ENCODE measurements at regions of chr20 and their contacts with region 1.

Region 1: GRCh38 chr20:10427060-10427692 is 6.8 kb downstream of the MKKS start:
- DNase-seq: no peak
- ATAC-seq: peak; percentile 72
- H3K4me3 ChIP-seq: no peak overlapping the region
- H3K27ac ChIP-seq: no peak overlapping the region
- H3K4me1 ChIP-seq: peaks cover 0 to 16% of the 10 kb centered on the region in 2 experiments; a peak in 3 of 4 replicates
- H3K27me3 ChIP-seq: no peaks in the 10 kb centered on the region
- CTCF ChIP-seq: peak; percentile 43 to 88 (median 78); a peak in 5 of 6 replicates
- POLR2A ChIP-seq: no peak
- RAD21 ChIP-seq: peak; percentile 54

Region 2: DNA sequence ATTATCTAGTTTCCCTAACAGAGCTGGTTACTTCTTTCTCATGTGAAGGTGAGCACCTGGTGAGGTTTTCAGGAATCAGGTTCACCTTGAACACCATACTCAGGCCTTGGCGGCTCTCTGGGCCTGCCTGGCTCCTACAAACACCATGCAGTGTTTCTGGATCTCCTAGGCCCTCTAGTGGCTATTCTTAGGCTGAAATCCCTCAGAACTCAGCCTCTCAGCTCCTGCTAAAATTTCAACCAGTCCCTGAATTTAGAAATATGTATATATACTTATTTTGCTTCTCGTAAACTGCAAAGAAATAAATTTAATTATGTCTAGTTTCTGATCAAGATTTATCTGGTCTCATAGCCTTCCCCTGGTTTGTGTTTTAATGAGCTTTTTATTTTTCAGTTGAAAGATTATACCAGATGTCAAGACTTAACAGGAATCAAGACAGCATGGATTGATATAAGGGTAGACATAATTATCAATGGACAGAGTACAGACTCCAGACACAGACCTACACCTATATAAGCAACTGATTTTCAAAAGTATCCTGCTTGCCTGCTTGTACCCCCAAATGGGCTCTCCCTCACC is 336.5 kb before region 1 on chr20:
- CTCF ChIA-PET with region 1: interaction called, 3 read pairs
- POLR2A ChIA-PET with region 1: no interaction called
- RAD21 ChIA-PET with region 1: no interaction called
- intact Hi-C with region 1: loop called (anchors 5 kb)
- DNase-seq: peak; percentile 38
- ATAC-seq: peak; percentile 91
- H3K4me3 ChIP-seq: no peak overlapping the region
- H3K27ac ChIP-seq: no peak overlapping the region
- H3K4me1 ChIP-seq: peaks cover 5 to 13% of the 10 kb centered on the region in 2 experiments; a peak in 3 of 4 replicates
- H3K27me3 ChIP-seq: no peaks in the 10 kb centered on the region
- CTCF ChIP-seq: peak; percentile 51 to 76 (median 73); a peak in 5 of 6 replicates
- POLR2A ChIP-seq: no peak
- RAD21 ChIP-seq: peak; percentile 80

Region 3: DNA sequence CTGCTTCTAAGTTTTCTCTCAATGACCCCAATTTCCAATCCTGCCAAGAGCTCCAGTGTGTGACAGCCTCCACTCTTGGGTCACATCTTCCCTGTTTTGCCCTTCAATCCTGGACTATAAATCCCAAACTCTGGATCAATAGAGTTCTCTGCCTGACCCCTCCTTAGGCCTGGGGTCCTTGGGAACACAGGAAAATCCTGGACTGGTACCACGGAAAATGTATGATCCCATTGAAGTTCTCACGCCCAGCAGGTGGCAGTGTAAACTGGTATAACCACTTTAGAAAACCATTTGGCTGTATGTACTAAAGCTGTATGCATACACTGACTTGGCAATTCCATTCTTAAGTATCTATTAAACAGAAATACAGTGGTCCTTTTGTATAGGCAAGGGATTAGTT is 110.6 kb before region 1 on chr20:
- CTCF ChIA-PET with region 1: interaction called, 3 read pairs
- POLR2A ChIA-PET with region 1: no interaction called
- RAD21 ChIA-PET with region 1: no interaction called
- intact Hi-C with region 1: loop called (anchors 1 kb)
- DNase-seq: peak; percentile 22
- ATAC-seq: peak; percentile 65
- H3K4me3 ChIP-seq: no peak overlapping the region
- H3K27ac ChIP-seq: no peak overlapping the region
- H3K4me1 ChIP-seq: no peaks in the 10 kb centered on the region
- H3K27me3 ChIP-seq: peaks cover 17% of the 10 kb centered on the region; the same call in 1 of the 2 replicates
- CTCF ChIP-seq: peak in 2 of 3 experiments; percentile 32 to 58; a peak in 4 of 6 replicates
- POLR2A ChIP-seq: no peak
- RAD21 ChIP-seq: peak; percentile 59